ENCODE measurements at regions of chr1 and their contacts with region 1.

Region 1: GRCh38 chr1:199684686-199685273 is 342.7 kb upstream of the NR5A2 start:
- DNase-seq: no peak
- H3K4me3 ChIP-seq: no peak overlapping the region
- H3K27ac ChIP-seq: no peak overlapping the region
- H3K4me1 ChIP-seq: no peaks in the 10 kb centered on the region
- H3K27me3 ChIP-seq: peaks cover 19% of the 10 kb centered on the region
- CTCF ChIP-seq: peak; percentile 85

Region 2: DNA sequence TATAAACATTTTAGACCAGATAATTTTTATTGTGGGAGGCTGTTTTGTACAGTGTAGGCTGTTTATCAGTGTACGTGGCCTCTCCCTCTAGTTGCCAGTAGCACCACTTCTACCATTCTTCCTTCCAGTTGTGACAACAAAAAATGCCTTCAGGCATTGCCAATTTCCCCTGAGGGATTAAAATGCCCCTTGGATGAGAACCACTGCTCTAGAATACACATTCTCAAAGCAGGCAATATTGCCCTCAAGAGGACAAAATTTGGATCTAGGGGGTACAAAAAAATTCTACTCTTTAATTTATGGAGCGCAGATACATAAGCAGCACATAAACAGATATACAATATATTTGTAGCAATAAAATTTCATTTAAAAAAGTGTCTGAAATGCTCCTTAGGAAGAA is 371.3 kb before region 1 on chr1:
- intact Hi-C with region 1: no loop called
- DNase-seq: no peak
- H3K4me3 ChIP-seq: no peak overlapping the region
- H3K27ac ChIP-seq: no peak overlapping the region
- H3K4me1 ChIP-seq: no peaks in the 10 kb centered on the region
- H3K27me3 ChIP-seq: no peaks in the 10 kb centered on the region
- CTCF ChIP-seq: no peak

Region 3: GRCh38 chr1:199629624-199630023 is 55.2 kb before region 1 on chr1:
- intact Hi-C with region 1: no loop called
- DNase-seq: no peak
- H3K4me3 ChIP-seq: no peak overlapping the region
- H3K27ac ChIP-seq: no peak overlapping the region
- H3K4me1 ChIP-seq: no peaks in the 10 kb centered on the region
- H3K27me3 ChIP-seq: no peaks in the 10 kb centered on the region
- CTCF ChIP-seq: no peak

Region 4: DNA sequence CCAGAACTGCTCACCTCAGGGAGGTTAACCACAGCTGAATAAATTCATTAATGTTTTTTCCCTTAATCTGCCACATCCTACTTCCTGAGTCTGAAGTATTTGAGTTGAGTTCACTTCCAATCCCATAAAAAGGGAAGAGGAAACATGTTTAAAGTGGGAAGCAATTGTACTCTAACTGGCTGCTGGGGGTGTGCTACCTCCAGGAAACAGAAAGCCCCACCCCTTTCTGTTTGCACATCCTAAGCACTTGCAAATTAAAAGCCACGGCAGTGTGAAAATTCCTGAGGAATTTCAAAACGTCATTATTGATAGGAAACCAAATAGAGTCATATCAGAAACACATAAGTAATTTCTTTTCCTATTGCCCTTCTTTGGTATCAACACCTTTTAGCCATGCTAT is 35.7 kb after region 1 on chr1:
- intact Hi-C with region 1: loop called (anchors 2 kb)
- DNase-seq: no peak
- H3K4me3 ChIP-seq: no peak overlapping the region
- H3K27ac ChIP-seq: no peak overlapping the region
- H3K4me1 ChIP-seq: no peaks in the 10 kb centered on the region
- H3K27me3 ChIP-seq: no peaks in the 10 kb centered on the region
- CTCF ChIP-seq: no peak

Region 5: GRCh38 chr1:199794105-199794863 is 109.5 kb after region 1 on chr1:
- intact Hi-C with region 1: no loop called
- DNase-seq: no peak
- H3K4me3 ChIP-seq: no peak overlapping the region
- H3K27ac ChIP-seq: no peak overlapping the region
- H3K4me1 ChIP-seq: no peaks in the 10 kb centered on the region
- H3K27me3 ChIP-seq: peaks cover 2% of the 10 kb centered on the region
- CTCF ChIP-seq: no peak

Region 6: DNA sequence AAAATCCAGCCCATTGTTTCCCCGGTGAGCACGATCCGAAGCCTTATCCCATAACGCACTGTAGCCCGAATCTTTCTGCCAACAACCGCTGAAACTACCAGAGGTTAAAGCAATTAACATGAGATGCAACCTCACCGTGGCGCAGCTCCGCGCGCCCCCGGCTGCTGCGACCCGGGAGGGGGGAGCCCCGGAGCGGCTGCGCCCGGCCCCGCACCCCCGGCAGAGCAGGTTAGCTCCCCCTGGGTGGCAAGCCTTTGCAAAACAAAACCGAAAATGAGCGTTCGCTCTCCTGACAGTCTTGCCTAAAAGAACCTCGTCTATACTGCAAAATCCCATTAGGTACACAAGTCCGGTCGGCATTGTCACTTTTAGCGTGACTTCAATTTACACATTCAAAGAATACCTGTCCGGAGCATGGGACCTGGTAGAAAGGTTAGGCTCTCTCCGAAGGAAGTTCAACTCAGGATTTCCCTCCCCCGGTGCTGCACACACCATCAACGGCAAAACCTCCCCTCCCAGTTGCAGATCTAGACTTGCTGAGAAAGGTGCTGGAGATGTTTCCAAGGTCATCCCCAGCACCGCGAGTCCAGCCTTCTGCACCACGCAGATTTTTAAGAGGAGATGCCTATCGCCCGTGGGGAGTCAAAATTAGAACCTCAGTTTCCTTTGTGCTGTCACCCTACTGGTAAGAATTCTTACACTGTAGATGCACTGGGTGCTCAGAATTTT is 617.6 kb after region 1 on chr1:
- intact Hi-C with region 1: loop called (anchors 10 kb)
- DNase-seq: no peak
- H3K4me3 ChIP-seq: peak overlapping the region; percentile 76
- H3K27ac ChIP-seq: no peak overlapping the region
- H3K4me1 ChIP-seq: peaks cover 19% of the 10 kb centered on the region
- H3K27me3 ChIP-seq: peaks cover 17% of the 10 kb centered on the region
- CTCF ChIP-seq: no peak

Region 7: DNA sequence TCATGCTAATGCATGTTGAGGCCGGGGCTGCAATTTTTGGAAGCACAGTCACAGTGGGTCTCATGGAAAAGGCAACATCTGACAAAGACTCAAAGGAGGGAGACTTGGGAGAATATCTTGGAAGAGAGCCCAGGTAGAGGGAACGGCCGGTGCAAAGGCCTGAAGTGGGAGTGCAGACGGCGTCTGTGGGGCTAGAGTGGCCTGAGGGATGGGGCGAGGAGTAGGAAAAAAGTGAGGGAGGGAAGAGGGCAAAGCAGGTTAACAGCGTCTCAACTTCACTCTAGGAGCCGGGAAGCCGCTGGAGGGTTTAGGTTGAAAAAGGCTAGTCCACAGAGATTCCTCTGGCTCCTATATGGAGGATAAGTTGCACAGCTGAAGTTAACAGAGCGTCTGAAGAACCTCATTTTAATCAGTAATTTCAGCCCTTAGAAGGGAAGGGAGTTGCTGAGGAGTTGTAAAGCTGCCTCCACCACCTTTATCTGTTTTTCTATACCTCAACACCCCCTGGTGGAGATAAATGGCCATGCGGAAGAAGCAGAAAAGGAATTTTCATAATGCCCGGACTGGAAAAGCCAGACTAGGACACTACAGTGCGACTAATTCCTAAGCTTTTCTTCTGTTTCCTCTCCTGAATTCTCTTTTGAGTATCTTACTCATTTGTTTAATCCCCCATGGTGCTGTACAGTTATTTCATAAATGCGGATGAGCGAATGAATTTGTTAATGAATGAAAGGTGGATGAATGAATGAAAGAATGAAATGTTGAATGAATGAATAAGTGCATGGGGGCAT is 803.8 kb after region 1 on chr1:
- intact Hi-C with region 1: loop called (anchors 10 kb)
- DNase-seq: no peak
- H3K4me3 ChIP-seq: no peak overlapping the region
- H3K27ac ChIP-seq: no peak overlapping the region
- H3K4me1 ChIP-seq: peaks cover 5% of the 10 kb centered on the region
- H3K27me3 ChIP-seq: peaks cover 39% of the 10 kb centered on the region
- CTCF ChIP-seq: peak; percentile 80